ENCODE measurements at regions of chr17 and their contacts with region 1.

Region 1: DNA sequence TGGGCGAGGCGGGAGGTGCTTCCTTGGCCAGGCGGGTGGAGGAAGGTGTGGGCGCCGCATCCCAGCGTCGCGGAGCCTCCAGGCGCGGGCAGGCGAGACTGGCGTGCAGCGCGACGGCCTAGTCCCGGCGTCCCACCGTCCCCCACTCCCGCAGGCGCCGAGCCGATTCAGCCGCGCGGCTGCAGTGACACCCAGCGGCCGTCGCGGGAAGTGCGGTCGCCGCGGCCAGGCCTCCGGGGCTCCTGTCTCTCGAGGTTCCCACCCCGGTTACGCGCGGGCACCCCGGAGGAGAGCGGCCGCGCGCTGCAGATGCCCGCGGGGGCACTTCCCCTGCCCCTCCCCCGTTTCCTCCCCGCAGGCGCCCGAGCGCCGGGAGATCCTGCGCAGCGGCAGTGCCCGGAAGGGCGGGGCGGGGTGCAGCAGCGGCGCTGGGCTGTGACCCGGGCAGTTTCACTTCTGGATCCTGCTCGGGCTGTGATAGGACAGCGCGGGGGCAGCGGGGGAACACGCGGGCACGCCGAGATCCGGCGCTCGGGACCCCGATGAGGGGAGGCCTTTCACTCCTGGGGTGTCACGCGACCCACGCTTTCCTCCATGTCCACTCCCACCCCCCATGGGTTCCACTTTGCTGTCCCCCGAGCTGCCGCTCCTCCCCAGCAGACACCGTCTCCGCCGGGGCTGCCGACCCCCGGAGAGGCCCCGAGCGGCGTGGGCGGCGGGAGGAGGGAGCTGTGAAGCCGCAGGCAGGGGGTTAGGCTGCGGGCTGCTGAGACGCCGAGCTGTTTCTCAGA is 16.6 kb downstream of the GRB7 start:
- DNase-seq: peak; percentile 95
- H3K4me3 ChIP-seq: peak overlapping the region; percentile 57 to 92 (median 77)
- H3K27ac ChIP-seq: peak overlapping the region; percentile 93 to 96 (median 94)
- H3K4me1 ChIP-seq: peaks cover 0 to 32% (median 16%) of the 10 kb centered on the region in 4 donors
- H3K27me3 ChIP-seq: no peaks in the 10 kb centered on the region
- CTCF ChIP-seq: peak; percentile 93 to 99 (median 96)
- EP300 ChIP-seq: no peak
- POLR2A ChIP-seq: peak; percentile 66 to 72

Region 2: DNA sequence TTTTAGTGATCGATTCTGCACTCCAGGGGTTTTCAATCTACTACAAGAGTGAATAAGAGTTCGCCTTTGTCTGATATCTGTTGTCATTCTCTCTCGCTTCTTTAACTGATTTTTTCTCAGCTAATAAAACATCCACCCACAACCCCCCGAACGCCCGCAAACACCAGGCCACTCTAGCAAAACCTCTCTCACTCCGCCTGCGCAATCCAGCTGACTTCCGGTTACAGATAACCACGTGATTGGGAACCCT is 554.6 kb before region 1 on chr17:
- intact Hi-C with region 1: loop called (anchors 10 kb)
- DNase-seq: peak; percentile 97
- H3K4me3 ChIP-seq: peak overlapping the region; percentile 82 to 96 (median 88)
- H3K27ac ChIP-seq: peak overlapping the region; percentile 91 to 99 (median 94)
- H3K4me1 ChIP-seq: peaks cover 0 to 64% (median 54%) of the 10 kb centered on the region in 4 donors
- H3K27me3 ChIP-seq: no peaks in the 10 kb centered on the region
- CTCF ChIP-seq: no peak
- EP300 ChIP-seq: no peak
- POLR2A ChIP-seq: no peak

Region 3: GRCh38 chr17:39605492-39606433 is 148.6 kb before region 1 on chr17:
- intact Hi-C with region 1: no loop called
- DNase-seq: no peak
- H3K4me3 ChIP-seq: peak overlapping the region in 2 of 4 donors; percentile 20 to 36
- H3K27ac ChIP-seq: no peak overlapping the region
- H3K4me1 ChIP-seq: peaks cover 2 to 37% (median 33%) of the 10 kb centered on the region in 4 donors
- H3K27me3 ChIP-seq: peaks cover 61 to 93% (median 83%) of the 10 kb centered on the region in 3 donors
- CTCF ChIP-seq: no peak
- EP300 ChIP-seq: no peak
- POLR2A ChIP-seq: no peak

Region 4: GRCh38 chr17:39621523-39622379 is 132.6 kb before region 1 on chr17:
- intact Hi-C with region 1: loop called (anchors 1 kb)
- DNase-seq: peak; percentile 93
- H3K4me3 ChIP-seq: no peak overlapping the region
- H3K27ac ChIP-seq: no peak overlapping the region
- H3K4me1 ChIP-seq: peaks cover 0 to 38% (median 30%) of the 10 kb centered on the region in 4 donors
- H3K27me3 ChIP-seq: peaks cover 14 to 32% (median 22%) of the 10 kb centered on the region in 3 donors
- CTCF ChIP-seq: peak; percentile 99 to 100 (median 99)
- EP300 ChIP-seq: no peak
- POLR2A ChIP-seq: no peak

Region 5: GRCh38 chr17:39687811-39688518 is 66.4 kb before region 1 on chr17 and contains the start of gene PGAP3:
- intact Hi-C with region 1: loop called (anchors 5 kb)
- DNase-seq: peak; percentile 92
- H3K4me3 ChIP-seq: peak within 1 kb of the TSS; percentile 62 to 71 (median 66)
- H3K27ac ChIP-seq: peak within 1 kb of the TSS; percentile 84 to 92 (median 88)
- H3K4me1 ChIP-seq: peaks cover 0 to 15% (median 15%) of the 10 kb centered on the region in 4 donors
- H3K27me3 ChIP-seq: no peaks in the 10 kb centered on the region
- CTCF ChIP-seq: no peak
- EP300 ChIP-seq: no peak
- POLR2A ChIP-seq: peak in 1 of 2 donors; percentile 50
- total RNA-seq, gene PGAP3: 6.9 to 12.1 (median 8.2) TPM

Region 6: GRCh38 chr17:39813631-39814030 is 59.3 kb after region 1 on chr17:
- intact Hi-C with region 1: no loop called
- DNase-seq: no peak
- H3K4me3 ChIP-seq: no peak overlapping the region
- H3K27ac ChIP-seq: no peak overlapping the region
- H3K4me1 ChIP-seq: no peaks in the 10 kb centered on the region
- H3K27me3 ChIP-seq: peaks cover 0 to 13% (median 0%) of the 10 kb centered on the region in 3 donors
- CTCF ChIP-seq: no peak
- EP300 ChIP-seq: no peak
- POLR2A ChIP-seq: no peak

Region 7: DNA sequence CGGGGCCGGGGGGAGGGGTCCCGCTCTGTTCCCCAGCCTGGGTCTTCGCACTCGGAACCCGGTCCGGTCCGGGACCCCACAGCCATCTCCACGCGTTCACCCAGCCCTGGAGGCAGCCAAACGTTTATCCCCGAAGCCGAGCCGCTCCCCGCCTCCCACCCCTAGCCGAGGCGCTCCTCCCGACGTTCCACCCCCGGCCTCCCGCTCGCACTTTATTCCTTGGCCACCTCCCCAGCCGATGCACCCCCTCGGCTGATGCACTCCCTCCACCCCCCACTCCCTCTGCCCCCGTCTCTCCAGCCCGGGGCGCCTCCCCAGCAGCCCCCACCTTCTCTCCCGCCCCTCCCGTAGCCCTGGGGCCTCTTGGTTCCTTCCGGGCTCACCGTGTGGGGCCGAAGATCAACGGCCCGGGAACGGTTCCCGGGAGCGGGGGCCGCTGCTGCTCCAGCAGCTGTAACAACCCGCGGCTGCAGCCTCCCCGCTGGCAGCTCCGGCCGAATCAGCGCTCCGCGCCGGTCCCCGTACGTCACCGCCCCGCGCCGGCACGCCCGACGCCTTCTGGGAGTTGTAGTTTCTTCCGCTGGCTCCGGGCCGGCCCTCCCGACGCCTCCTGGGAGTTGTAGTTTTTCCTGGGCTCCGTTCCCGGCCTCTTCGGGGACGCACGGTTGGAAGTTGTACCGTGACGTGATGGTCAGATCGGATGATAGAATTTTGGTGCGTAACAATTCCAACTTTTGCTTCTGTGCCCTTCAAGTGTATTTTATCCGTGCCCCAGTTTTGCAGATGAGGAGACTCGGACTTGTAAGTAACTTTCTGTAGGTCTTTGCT is 173.0 kb after region 1 on chr17 and contains the starts of genes LRRC3C and ORMDL3:
- intact Hi-C with region 1: loop called (anchors 5 kb)
- DNase-seq: peak; percentile 98
- H3K4me3 ChIP-seq: peak within 1 kb of the TSS; percentile 54 to 93 (median 91)
- H3K27ac ChIP-seq: peak within 1 kb of the TSS; percentile 89 to 92 (median 90)
- H3K4me1 ChIP-seq: peaks cover 0 to 46% (median 33%) of the 10 kb centered on the region in 4 donors
- H3K27me3 ChIP-seq: no peaks in the 10 kb centered on the region
- CTCF ChIP-seq: no peak
- EP300 ChIP-seq: peak in 1 of 4 donors; percentile 72
- POLR2A ChIP-seq: peak in 1 of 2 donors; percentile 64
- total RNA-seq, gene LRRC3C: not detected
- total RNA-seq, gene ORMDL3: 39.8 to 55.7 (median 51.8) TPM